ENCODE measurements at regions of chr7 and their contacts with region 1.

Region 1: DNA sequence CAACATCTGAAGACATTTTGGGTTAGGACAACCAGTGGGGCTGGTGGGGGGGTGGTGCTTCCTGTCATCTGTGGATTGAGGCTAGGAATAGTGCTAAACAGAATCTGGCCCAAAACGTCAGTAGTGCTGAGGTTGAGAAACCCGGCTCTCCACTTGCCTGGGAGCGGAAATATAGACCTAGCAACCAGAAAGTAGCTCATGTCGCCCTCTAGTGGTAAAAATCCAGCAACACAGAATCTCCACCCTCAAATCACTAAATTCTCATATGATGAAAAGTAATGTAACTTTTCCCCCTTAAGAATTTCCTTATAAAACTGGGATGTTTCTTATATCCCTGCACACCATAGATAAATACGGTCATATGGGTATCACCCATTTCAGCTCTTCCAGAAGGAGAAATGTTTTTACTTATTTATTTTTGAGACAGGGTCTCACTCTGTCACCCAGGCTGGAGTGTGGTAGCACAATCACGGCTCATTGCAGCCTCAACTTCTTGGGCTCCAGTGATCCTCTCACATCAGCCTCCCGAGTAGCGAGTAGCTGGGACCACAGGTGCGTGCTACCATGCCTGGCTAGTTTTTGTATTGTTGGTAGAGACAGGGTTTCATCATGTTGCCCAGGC is 34.4 kb downstream of the ZC3HAV1 start:
- DNase-seq: peak; percentile 28 to 92 (median 73)
- ATAC-seq: peak; percentile 77
- H3K4me3 ChIP-seq: no peak overlapping the region
- H3K4me3 Mint-ChIP-seq: peak overlapping the region; percentile 60
- H3K27ac ChIP-seq: peak overlapping the region in 1 of 2 experiments; percentile 74
- H3K27ac Mint-ChIP-seq: peak overlapping the region; percentile 86
- H3K4me1 ChIP-seq: peaks cover 73% of the 10 kb centered on the region
- H3K4me1 Mint-ChIP-seq: peaks cover 66% of the 10 kb centered on the region
- H3K27me3 ChIP-seq: no peaks in the 10 kb centered on the region
- H3K27me3 Mint-ChIP-seq: no peaks in the 10 kb centered on the region
- CTCF ChIP-seq: peak; percentile 70

Region 2: GRCh38 chr7:138303943-138304495 is 771.1 kb before region 1 on chr7:
- CTCF ChIA-PET with region 1: no interaction called
- POLR2A ChIA-PET with region 1: no interaction called
- intact Hi-C with region 1: no loop called
- DNase-seq: no peak
- ATAC-seq: no peak
- H3K4me3 ChIP-seq: no peak overlapping the region
- H3K4me3 Mint-ChIP-seq: no peak overlapping the region
- H3K27ac ChIP-seq: no peak overlapping the region
- H3K27ac Mint-ChIP-seq: no peak overlapping the region
- H3K4me1 ChIP-seq: no peaks in the 10 kb centered on the region
- H3K4me1 Mint-ChIP-seq: no peaks in the 10 kb centered on the region
- H3K27me3 ChIP-seq: no peaks in the 10 kb centered on the region
- H3K27me3 Mint-ChIP-seq: no peaks in the 10 kb centered on the region
- CTCF ChIP-seq: no peak

Region 3: DNA sequence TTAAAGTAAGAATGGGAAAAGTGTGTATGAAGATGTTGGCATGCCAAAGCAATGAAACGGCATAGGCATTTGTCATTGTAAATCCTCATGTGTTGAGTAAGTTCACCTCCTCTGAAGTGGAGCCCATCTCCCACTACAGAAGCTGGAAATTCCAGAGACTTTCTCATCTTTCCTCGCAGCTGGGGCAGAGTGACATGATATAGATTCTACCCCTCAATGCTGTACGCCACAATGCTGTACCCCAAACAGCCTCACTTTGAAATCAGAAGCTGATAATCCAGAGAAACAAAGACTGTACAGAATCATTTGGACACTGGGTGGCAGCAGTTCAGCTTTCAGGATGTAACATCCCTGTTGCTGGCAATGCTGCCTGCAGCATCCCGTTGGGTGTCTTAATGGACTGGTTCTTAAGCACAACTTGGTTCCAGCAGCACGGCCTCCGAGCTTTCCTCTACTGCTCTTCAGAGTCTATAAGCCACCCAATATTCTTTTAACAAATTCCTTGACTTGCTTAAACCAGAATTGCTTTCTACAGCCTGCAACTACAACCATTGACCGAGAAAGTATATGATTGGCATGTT is 58.1 kb before region 1 on chr7:
- CTCF ChIA-PET with region 1: interaction called, 72 read pairs
- POLR2A ChIA-PET with region 1: interaction called, 4 read pairs
- intact Hi-C with region 1: loop called (anchors 1 kb)
- DNase-seq: peak; percentile 5 to 81 (median 68)
- ATAC-seq: peak; percentile 94
- H3K4me3 ChIP-seq: no peak overlapping the region
- H3K4me3 Mint-ChIP-seq: no peak overlapping the region
- H3K27ac ChIP-seq: no peak overlapping the region
- H3K27ac Mint-ChIP-seq: no peak overlapping the region
- H3K4me1 ChIP-seq: peaks cover 4% of the 10 kb centered on the region
- H3K4me1 Mint-ChIP-seq: peaks cover 8% of the 10 kb centered on the region
- H3K27me3 ChIP-seq: no peaks in the 10 kb centered on the region
- H3K27me3 Mint-ChIP-seq: no peaks in the 10 kb centered on the region
- CTCF ChIP-seq: peak; percentile 65

Region 4: DNA sequence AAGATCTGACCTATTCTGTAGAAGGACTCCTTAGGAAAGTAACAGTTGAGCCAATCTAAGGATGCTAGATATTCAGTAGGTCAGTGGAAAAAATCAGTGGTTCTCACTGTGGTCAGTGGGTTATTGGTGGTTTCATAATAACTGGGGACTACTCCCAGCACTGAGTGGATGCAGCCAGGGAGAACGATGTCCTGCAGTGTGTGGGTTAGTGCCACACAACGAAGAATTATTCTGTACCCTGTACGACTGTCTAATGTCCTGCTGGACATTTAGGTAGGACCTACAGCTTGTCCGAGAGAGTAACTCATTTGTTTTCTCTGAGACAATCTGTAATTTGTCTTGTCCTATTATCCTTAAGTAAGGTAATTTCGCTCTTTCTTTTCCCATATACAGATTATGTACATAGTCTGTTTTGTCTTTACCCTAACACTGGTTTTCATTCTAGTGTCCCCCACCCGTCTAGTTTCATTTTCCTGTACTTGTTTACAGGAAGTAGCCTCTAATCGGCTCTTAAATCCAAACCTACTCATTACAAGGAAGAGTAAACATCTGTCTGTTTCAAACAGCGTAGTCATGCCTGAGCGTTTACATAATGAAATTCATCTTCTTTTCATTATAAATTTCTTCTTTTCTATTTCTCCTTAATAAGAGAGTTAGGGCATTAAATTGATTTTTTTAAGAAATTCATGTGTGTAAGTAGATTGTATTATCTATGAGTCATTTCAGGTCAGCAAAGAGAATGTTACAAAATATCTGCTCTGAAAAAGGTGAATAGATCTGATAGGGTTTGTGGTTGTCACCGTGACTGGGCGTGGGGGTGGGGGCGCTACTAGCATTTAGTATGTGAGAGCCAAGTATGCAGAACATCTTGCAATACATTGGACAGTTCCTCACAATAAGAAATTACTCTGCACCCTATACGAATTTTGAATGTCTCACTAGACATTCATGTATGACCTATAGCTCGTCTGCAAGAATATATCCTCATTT is 31.0 kb before region 1 on chr7:
- CTCF ChIA-PET with region 1: interaction called, 19 read pairs
- POLR2A ChIA-PET with region 1: interaction called, 3 read pairs
- intact Hi-C with region 1: loop called (anchors 2 kb)
- DNase-seq: peak; percentile 43 to 83 (median 78)
- ATAC-seq: peak; percentile 75
- H3K4me3 ChIP-seq: no peak overlapping the region
- H3K4me3 Mint-ChIP-seq: peak overlapping the region; percentile 24
- H3K27ac ChIP-seq: peak overlapping the region in 1 of 2 experiments; percentile 59
- H3K27ac Mint-ChIP-seq: peak overlapping the region; percentile 89
- H3K4me1 ChIP-seq: peaks cover 24% of the 10 kb centered on the region
- H3K4me1 Mint-ChIP-seq: peaks cover 61% of the 10 kb centered on the region
- H3K27me3 ChIP-seq: no peaks in the 10 kb centered on the region
- H3K27me3 Mint-ChIP-seq: no peaks in the 10 kb centered on the region
- CTCF ChIP-seq: no peak

Region 5: DNA sequence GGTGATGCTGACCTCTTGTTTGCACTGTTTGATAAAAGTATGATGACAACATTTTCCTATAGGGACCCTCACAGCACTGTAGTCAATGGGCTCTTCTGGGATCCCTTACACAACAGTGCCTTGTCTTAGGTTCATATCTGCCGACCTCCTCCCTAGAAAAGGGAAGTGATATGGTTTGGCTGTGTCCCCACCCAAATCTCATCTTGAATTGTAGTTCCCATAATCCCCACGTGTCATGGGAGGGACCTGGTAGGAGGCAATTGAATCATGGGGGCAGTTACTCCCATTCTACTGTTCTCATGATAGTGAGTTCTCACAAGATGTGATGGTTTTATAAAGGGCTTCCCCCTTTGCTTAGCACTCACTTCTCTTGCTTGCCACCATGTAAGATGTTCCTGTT is 11.3 kb after region 1 on chr7:
- CTCF ChIA-PET with region 1: interaction called, 23 read pairs
- POLR2A ChIA-PET with region 1: interaction called, 5 read pairs
- intact Hi-C with region 1: loop called in 1 of 2 experiments (anchors 1 kb)
- DNase-seq: peak in 1 of 9 experiments; percentile 19
- ATAC-seq: no peak
- H3K4me3 ChIP-seq: no peak overlapping the region
- H3K4me3 Mint-ChIP-seq: no peak overlapping the region
- H3K27ac ChIP-seq: no peak overlapping the region
- H3K27ac Mint-ChIP-seq: peak overlapping the region; percentile 66
- H3K4me1 ChIP-seq: peaks cover 85% of the 10 kb centered on the region
- H3K4me1 Mint-ChIP-seq: peaks cover 83% of the 10 kb centered on the region
- H3K27me3 ChIP-seq: no peaks in the 10 kb centered on the region
- H3K27me3 Mint-ChIP-seq: no peaks in the 10 kb centered on the region
- CTCF ChIP-seq: no peak

Region 6: DNA sequence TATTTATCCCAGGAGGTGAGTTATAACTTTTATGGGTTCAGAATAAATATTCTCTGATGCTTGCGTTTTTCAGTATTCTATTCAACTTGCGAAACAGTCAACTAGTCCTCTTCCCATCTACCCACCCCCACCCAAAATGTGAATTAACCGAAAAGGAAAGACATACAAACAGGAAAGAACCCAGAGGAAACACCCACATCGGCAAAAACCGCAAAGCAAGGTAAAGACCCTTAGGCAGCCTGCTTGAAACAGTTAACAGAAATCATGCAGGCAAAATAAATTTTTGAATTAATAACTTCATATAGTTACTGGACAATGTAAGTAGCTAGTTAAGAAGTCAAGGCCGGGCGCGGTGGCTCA is 28.9 kb after region 1 on chr7:
- CTCF ChIA-PET with region 1: interaction called, 14 read pairs
- POLR2A ChIA-PET with region 1: interaction called, 10 read pairs
- intact Hi-C with region 1: loop called in 1 of 2 experiments (anchors 1 kb)
- DNase-seq: peak in 5 of 9 experiments; percentile 28 to 76 (median 48)
- ATAC-seq: no peak
- H3K4me3 ChIP-seq: peak overlapping the region; percentile 61 to 99
- H3K4me3 Mint-ChIP-seq: peak overlapping the region; percentile 93
- H3K27ac ChIP-seq: peak overlapping the region; percentile 61 to 97
- H3K27ac Mint-ChIP-seq: peak overlapping the region; percentile 93
- H3K4me1 ChIP-seq: peaks cover 21% of the 10 kb centered on the region
- H3K4me1 Mint-ChIP-seq: peaks cover 45% of the 10 kb centered on the region
- H3K27me3 ChIP-seq: no peaks in the 10 kb centered on the region
- H3K27me3 Mint-ChIP-seq: no peaks in the 10 kb centered on the region
- CTCF ChIP-seq: no peak

Region 7: DNA sequence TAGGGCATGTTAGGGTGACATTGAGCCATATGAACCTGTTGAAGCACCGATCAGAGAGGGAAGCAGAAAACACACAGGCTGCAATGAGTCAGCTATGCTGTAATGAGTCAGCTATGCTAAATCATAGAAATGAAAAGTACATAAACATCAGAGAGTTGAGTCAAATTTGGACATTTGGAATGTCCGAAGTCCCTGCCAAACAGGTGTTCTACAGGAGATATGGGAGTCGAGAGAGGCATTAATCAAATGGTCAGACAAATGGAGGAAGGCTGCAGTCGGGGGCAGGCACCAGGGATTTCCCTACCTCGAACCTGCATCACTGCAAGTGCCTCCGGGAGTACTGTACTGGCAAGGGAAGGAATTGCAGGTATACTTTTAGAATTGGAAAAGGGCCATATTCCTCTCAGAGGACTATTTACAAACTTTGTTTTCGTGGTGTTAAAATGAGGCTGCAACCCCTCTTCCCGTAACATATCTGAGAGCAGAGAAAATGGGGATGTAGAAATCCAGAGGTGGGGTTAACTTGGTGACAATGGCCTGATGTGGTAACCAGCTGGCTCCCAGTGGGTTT is 43.2 kb after region 1 on chr7:
- CTCF ChIA-PET with region 1: interaction called, 10 read pairs
- POLR2A ChIA-PET with region 1: interaction called, 5 read pairs
- intact Hi-C with region 1: loop called in 1 of 2 experiments (anchors 5 kb)
- DNase-seq: peak in 1 of 9 experiments; percentile 21
- ATAC-seq: no peak
- H3K4me3 ChIP-seq: peak overlapping the region in 1 of 2 experiments; percentile 33
- H3K4me3 Mint-ChIP-seq: peak overlapping the region; percentile 43
- H3K27ac ChIP-seq: peak overlapping the region in 1 of 2 experiments; percentile 38
- H3K27ac Mint-ChIP-seq: peak overlapping the region; percentile 88
- H3K4me1 ChIP-seq: peaks cover 27% of the 10 kb centered on the region
- H3K4me1 Mint-ChIP-seq: peaks cover 36% of the 10 kb centered on the region
- H3K27me3 ChIP-seq: no peaks in the 10 kb centered on the region
- H3K27me3 Mint-ChIP-seq: no peaks in the 10 kb centered on the region
- CTCF ChIP-seq: no peak

Region 8: GRCh38 chr7:139230774-139231512 is 155.8 kb after region 1 on chr7 and contains the start of gene UBN2:
- CTCF ChIA-PET with region 1: no interaction called
- POLR2A ChIA-PET with region 1: no interaction called
- intact Hi-C with region 1: no loop called
- DNase-seq: peak; percentile 65 to 96 (median 89)
- ATAC-seq: peak; percentile 72
- H3K4me3 ChIP-seq: peak within 1 kb of the TSS; percentile 73 to 86
- H3K4me3 Mint-ChIP-seq: peak within 1 kb of the TSS; percentile 99
- H3K27ac ChIP-seq: peak within 1 kb of the TSS; percentile 68 to 81
- H3K27ac Mint-ChIP-seq: peak within 1 kb of the TSS; percentile 97
- H3K4me1 ChIP-seq: peaks cover 20% of the 10 kb centered on the region
- H3K4me1 Mint-ChIP-seq: peaks cover 33% of the 10 kb centered on the region
- H3K27me3 ChIP-seq: no peaks in the 10 kb centered on the region
- H3K27me3 Mint-ChIP-seq: peaks cover 5% of the 10 kb centered on the region
- CTCF ChIP-seq: no peak
- total RNA-seq, gene UBN2: 12.2 to 13.0 TPM

Measured in CD8-positive, alpha-beta T cell (primary cell).